Gastrocnemius medialis (tissue), 4 donors: ENCODE measurements at regions of chr15 and their contacts with region 1.

Region 1: GRCh38 chr15:60916679-60917460 is 312.2 kb downstream of the RORA start:
- DNase-seq: peak; percentile 80 to 83
- ATAC-seq: peak; percentile 78 to 83
- H3K4me3 ChIP-seq: peak overlapping the region; percentile 30 to 53 (median 41)
- H3K27ac ChIP-seq: peak overlapping the region; percentile 71 to 80 (median 76)
- H3K4me1 ChIP-seq: peaks cover 35 to 45% of the 10 kb centered on the region in 2 donors
- H3K27me3 ChIP-seq: no peaks in the 10 kb centered on the region
- CTCF ChIP-seq: peak; percentile 76 to 86 (median 84)
- POLR2A ChIP-seq: no peak

Region 2: DNA sequence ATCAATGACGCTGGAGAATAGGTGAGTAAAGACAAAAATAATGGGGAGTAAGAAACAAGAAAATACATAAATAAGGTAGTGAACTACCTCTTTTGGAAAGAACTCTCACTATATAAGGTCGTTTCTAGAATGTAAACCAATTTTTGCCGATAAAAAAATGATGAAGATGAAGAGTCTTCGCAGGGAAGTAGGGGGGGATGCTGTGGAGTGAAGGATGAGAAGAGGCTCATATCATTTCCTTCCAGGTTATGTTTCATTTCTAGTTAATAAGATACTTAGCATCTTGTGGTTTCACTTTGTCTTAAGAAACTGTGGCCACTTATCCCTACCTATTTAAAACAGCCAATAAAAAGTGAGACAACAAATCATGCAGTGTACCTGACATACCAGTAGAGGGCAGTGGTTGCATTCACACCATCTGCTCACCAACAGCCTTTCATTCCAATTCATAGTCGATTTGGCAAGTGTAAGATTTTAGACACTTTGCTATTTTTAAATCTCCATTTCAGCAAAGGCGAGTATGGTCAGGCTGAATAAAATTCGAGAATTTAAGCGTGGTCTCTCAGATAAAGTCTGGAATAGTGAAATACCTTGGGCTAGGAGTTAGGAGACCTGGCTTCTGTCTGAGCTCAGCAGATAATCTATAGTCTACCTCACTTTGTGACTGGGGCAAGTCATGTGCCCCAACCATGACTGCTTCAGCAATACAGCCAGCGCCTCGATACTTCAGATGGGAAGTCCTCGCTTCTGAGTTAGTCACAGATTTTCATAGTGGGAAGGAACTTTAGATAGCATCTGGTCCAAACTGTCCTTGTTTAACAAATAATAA is 409.1 kb before region 1 on chr15:
- in situ Hi-C with region 1: no loop called
- intact Hi-C with region 1: loop called (anchors 5 kb)
- DNase-seq: peak; percentile 21 to 40
- ATAC-seq: peak; percentile 76 to 83
- H3K4me3 ChIP-seq: no peak overlapping the region
- H3K27ac ChIP-seq: peak overlapping the region; percentile 54 to 64 (median 60)
- H3K4me1 ChIP-seq: peaks cover 28 to 35% of the 10 kb centered on the region in 2 donors
- H3K27me3 ChIP-seq: no peaks in the 10 kb centered on the region
- CTCF ChIP-seq: peak; percentile 86 to 94 (median 88)
- POLR2A ChIP-seq: no peak

Region 3: DNA sequence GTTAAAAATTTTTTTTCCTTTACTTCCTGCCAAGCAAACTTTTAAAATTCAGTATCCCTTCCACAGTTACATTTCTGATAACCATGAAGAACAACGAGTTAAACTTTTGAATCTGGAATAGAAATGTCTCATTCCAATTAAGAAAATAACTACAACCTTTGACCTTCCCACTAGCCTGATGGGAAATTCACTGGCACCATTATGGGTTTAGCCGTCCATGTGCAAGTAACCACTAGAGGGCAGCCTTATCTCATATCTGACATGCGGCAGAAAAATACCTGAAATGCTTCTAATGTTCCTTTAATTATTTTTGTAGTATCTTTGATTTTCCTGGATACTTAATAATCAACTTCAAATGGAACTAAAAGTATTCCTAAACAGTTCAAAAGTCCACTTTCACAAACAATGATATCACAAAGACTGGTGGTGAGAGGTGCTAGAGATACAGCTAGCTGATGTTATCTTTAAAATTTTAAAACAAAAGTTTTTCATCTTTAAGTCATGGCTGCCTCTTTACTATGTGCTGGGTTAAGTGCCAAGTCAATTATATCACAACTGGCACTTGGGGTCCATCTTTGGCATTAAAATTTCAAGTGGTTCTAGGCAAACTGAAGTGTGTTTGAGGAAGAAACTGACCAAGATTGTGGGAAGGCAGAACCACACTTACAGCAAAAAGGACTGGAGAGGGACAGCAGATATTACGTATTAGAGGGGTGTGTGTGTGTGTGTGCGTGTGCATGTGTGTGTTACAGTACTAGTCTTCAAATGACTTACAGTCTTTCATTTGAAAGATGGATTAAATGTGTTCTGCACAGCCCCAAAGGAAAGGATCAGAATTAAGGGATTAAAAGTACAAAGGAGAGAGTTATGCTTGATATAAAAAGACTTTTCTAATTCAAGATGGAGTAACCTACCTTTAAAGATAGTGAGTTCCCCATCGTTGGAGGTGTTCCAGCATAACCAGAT is 330.8 kb before region 1 on chr15:
- in situ Hi-C with region 1: loop called (anchors 5 kb)
- intact Hi-C with region 1: loop called (anchors 1 kb)
- DNase-seq: peak; percentile 32 to 38
- ATAC-seq: peak; percentile 64 to 78
- H3K4me3 ChIP-seq: no peak overlapping the region
- H3K27ac ChIP-seq: peak overlapping the region; percentile 12 to 64 (median 34)
- H3K4me1 ChIP-seq: peaks cover 76 to 95% of the 10 kb centered on the region in 2 donors
- H3K27me3 ChIP-seq: no peaks in the 10 kb centered on the region
- CTCF ChIP-seq: peak; percentile 83 to 94 (median 87)
- POLR2A ChIP-seq: no peak

Region 4: DNA sequence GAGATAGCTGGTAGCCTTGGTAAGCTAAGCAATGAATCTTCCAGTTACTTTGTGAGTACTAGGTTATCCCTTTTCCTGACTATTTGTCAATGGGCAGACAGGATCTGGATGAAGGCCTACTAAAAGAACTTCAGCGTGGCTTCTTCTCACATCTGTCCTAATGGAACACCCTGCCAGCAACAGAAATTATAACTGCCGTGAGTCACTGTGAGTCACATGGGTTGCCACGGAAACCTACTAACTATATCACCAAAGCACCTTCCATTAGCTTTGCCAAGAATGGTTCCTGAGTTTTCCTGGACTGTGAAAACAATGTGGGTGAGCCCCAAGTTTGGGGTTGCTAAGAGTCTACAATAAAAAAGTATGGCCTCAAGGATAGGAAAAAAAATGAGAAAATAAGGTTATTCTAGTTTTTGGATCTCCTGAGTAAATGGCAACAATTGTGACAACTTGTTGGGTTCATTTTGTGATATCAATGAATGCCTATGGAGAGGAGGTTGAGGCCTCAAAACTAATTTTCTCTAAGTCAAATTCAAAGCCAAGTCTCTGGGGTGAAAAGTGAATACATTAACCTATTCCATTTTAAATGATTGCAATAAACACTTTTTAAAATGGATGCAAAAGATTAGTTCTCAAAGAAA is 242.8 kb before region 1 on chr15:
- in situ Hi-C with region 1: no loop called
- intact Hi-C with region 1: loop called (anchors 10 kb)
- DNase-seq: peak; percentile 65 to 73
- ATAC-seq: peak; percentile 84 to 86
- H3K4me3 ChIP-seq: no peak overlapping the region
- H3K27ac ChIP-seq: peak overlapping the region; percentile 70 to 90 (median 80)
- H3K4me1 ChIP-seq: peaks cover 35 to 39% of the 10 kb centered on the region in 2 donors
- H3K27me3 ChIP-seq: no peaks in the 10 kb centered on the region
- CTCF ChIP-seq: no peak
- POLR2A ChIP-seq: no peak

Region 5: DNA sequence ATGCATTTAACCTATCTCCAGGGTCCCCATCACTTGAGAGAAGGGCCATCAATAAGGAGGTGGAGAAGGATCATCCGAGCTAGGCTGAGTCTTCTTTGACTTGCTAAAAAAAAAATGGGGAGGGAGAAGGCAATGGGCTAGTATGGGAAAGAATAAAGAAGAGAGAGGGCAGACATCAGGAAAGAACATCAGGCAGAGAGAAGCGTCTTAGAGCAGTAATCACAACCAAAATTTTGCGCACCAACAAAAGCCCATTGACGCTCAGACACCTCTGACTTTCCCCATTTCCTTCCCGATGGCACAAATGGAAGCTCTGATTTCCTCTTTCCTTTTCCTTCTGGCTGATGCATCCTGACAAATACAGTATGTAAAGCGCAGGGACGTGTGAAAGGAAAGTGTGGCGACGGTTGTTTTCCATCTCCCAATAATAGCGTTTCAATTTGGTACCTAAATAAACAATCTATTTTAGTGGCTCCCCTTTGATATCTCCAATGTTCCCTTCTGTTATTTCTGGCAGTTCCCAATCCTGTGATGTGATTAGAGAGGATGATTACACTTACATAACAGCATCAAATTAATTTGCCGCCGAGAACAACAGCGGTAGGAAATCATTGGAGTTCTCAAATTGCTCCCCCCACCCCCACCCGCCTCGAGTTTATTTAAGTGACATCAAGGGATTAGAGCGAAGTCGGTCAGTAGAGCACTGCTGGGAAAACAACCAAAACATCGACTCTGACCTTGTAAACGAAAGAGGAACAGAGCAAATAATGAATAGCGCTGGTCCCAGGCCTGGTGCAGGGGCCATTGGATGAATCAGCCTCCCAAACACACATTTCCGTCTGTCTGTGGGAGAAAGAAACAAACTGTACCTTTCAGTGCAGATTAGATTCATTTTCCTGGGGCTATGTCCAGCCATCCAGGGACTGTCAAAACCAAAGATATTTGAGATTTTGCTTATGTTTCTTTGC is 164.6 kb before region 1 on chr15:
- in situ Hi-C with region 1: no loop called
- intact Hi-C with region 1: loop called (anchors 5 kb)
- DNase-seq: peak; percentile 22 to 61
- ATAC-seq: peak; percentile 73 to 91
- H3K4me3 ChIP-seq: peak overlapping the region; percentile 45 to 47 (median 46)
- H3K27ac ChIP-seq: peak overlapping the region; percentile 77 to 88 (median 80)
- H3K4me1 ChIP-seq: peaks cover 20 to 24% of the 10 kb centered on the region in 2 donors
- H3K27me3 ChIP-seq: no peaks in the 10 kb centered on the region
- CTCF ChIP-seq: no peak
- POLR2A ChIP-seq: no peak

Region 6: DNA sequence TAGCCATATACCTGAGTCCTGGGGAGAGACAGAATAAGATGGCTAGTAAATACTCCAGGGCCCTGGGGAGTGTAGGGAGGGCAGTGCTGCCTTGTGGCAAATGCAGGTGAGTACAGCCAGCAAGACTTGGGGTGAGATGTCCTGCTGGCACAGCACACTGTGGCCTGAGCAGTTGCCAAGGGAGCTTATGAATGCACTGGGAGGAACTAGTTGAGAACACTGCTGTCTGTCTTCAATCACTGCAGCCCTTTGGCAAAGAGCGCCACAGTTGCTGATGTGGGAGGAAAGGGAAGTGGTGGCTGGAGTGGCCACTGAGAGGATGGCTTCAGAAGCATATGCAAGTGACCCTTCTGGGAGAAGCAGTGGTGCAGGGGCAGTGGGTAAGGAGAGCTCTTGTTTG is 47.7 kb after region 1 on chr15:
- in situ Hi-C with region 1: no loop called
- intact Hi-C with region 1: no loop called
- DNase-seq: peak; percentile 78 to 79
- ATAC-seq: peak; percentile 85 to 94
- H3K4me3 ChIP-seq: no peak overlapping the region
- H3K27ac ChIP-seq: peak overlapping the region in 1 of 4 donors; percentile 58
- H3K4me1 ChIP-seq: peaks cover 32 to 37% of the 10 kb centered on the region in 2 donors
- H3K27me3 ChIP-seq: no peaks in the 10 kb centered on the region
- CTCF ChIP-seq: peak in 3 of 5 experiments; percentile 32 to 48 (median 35)
- POLR2A ChIP-seq: no peak

Region 7: GRCh38 chr15:61051569-61052031 is 134.7 kb after region 1 on chr15:
- in situ Hi-C with region 1: loop called in 1 of 4 experiments (anchors 10 kb)
- intact Hi-C with region 1: loop called (anchors 1 kb)
- DNase-seq: peak; percentile 32 to 37
- ATAC-seq: peak; percentile 76 to 84
- H3K4me3 ChIP-seq: no peak overlapping the region
- H3K27ac ChIP-seq: peak overlapping the region in 1 of 4 donors; percentile 3
- H3K4me1 ChIP-seq: peaks cover 18 to 32% of the 10 kb centered on the region in 2 donors
- H3K27me3 ChIP-seq: no peaks in the 10 kb centered on the region
- CTCF ChIP-seq: peak; percentile 33 to 73 (median 59)
- POLR2A ChIP-seq: no peak